CD8-positive, alpha-beta memory T cell (primary cell): ENCODE measurements at regions of chr16 and their contacts with region 1.

Region 1: GRCh38 chr16:67428146-67428731 is 2.7 kb upstream of the HSD11B2 start:
- DNase-seq: peak in 4 of 5 donors; percentile 20 to 63 (median 26)
- H3K4me3 ChIP-seq: no peak overlapping the region
- H3K4me3 Mint-ChIP-seq: peak overlapping the region in 1 of 7 donors; percentile 8
- H3K27ac ChIP-seq: no peak overlapping the region
- H3K27ac Mint-ChIP-seq: no peak overlapping the region
- H3K4me1 ChIP-seq: peaks cover 6% of the 10 kb centered on the region
- H3K4me1 Mint-ChIP-seq: peaks cover 0 to 14% (median 10%) of the 10 kb centered on the region in 3 donors
- H3K27me3 ChIP-seq: peaks cover 9% of the 10 kb centered on the region
- H3K27me3 Mint-ChIP-seq: peaks cover 34 to 62% of the 10 kb centered on the region in 2 donors

Region 2: DNA sequence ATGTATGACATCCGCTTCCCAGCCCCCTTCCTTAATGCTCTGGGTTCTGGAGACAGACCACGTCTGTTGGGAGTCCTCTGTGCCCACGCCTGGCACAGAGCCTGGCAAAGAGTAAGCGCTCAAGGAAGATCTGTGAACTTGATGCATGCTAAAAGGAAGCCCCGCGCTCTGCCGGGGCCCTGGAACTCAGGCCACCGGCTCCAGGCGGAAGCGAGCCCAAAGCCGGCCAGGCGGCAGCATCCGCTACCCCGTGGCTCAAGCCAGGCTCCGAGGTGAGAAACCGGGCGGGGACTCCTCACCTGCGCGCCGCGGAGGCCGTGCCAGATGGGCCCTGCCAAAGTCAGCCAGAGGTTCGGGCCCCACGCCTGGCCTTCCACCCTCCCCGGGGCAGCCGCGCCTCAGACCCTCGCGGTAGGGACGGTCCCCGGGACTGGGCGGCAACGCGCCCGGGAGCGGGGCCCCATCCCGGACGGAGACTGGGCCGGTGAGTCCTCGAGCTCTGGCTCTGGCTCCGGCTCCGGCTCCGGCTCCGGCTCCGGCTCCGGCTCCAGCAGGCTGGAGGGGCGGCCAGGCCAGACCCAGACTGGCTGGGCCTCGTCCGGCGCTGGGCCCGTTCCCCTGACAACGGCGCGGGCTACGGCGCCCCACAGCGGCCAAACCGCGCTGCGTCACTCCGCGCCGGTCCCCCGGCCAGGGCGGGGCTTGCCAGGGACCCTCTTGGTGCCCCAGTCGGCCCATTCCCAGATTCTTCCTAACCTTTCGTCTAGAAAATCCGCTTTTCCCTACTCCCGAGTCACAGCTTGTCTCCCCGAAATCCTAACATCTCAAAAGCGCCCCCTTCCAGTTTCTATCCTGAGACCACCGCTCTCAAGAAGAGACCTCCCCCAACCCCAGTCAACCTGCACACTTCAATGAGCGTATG is 12.1 kb before region 1 on chr16 and contains the start of gene ZDHHC1:
- CTCF ChIA-PET with region 1: interaction called, 10 read pairs
- POLR2A ChIA-PET with region 1: no interaction called
- DNase-seq: peak; percentile 25 to 56 (median 42)
- H3K4me3 ChIP-seq: peak within 1 kb of the TSS; percentile 39
- H3K4me3 Mint-ChIP-seq: peak within 1 kb of the TSS; percentile 64 to 87 (median 78)
- H3K27ac ChIP-seq: no peak within 1 kb of the TSS
- H3K27ac Mint-ChIP-seq: peak within 1 kb of the TSS in 6 of 8 donors; percentile 29 to 81 (median 65)
- H3K4me1 ChIP-seq: peaks cover 8% of the 10 kb centered on the region
- H3K4me1 Mint-ChIP-seq: peaks cover 6 to 22% (median 18%) of the 10 kb centered on the region in 3 donors
- H3K27me3 ChIP-seq: peaks cover 6% of the 10 kb centered on the region
- H3K27me3 Mint-ChIP-seq: peaks cover 23 to 43% of the 10 kb centered on the region in 2 donors
- total RNA-seq, gene ZDHHC1: 1.3 TPM

Region 3: DNA sequence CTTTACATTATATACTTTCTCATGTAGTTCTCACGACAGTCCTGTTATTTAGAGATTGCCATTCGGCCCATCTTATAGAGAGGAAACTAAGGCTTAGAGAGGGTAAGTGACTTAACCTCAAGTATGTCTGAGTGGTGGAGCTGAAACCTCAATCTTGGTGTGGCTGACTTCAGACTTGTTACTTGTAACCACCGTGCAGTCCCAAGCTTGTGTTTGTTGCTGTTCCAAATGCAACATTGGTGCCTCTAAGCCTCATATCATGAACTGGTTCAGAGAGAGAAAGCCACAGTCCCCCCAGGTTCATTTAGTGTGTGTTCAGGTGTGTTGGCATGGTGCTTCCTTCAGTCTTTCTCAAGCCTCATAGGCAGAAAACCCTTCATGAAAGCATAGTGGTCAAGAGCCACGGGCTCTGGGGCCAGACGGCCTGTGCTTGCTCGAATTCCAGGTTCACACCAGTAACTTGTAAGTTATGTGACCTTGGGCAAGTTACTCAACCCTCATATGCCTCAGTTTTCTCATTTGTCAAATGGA is 1348.6 kb after region 1 on chr16:
- CTCF ChIA-PET with region 1: no interaction called
- POLR2A ChIA-PET with region 1: interaction called, 18 read pairs
- DNase-seq: peak in 3 of 5 donors; percentile 6 to 60 (median 27)
- H3K4me3 ChIP-seq: no peak overlapping the region
- H3K4me3 Mint-ChIP-seq: peak overlapping the region in 5 of 7 donors; percentile 4 to 65 (median 44)
- H3K27ac ChIP-seq: no peak overlapping the region
- H3K27ac Mint-ChIP-seq: peak overlapping the region in 7 of 8 donors; percentile 2 to 81 (median 35)
- H3K4me1 ChIP-seq: peaks cover 9% of the 10 kb centered on the region
- H3K4me1 Mint-ChIP-seq: peaks cover 7 to 17% (median 15%) of the 10 kb centered on the region in 3 donors
- H3K27me3 ChIP-seq: no peaks in the 10 kb centered on the region
- H3K27me3 Mint-ChIP-seq: peaks cover 3 to 6% of the 10 kb centered on the region in 2 donors